A673 (cell line): ENCODE measurements at regions of chr1 and their contacts with region 1.

Region 1: DNA sequence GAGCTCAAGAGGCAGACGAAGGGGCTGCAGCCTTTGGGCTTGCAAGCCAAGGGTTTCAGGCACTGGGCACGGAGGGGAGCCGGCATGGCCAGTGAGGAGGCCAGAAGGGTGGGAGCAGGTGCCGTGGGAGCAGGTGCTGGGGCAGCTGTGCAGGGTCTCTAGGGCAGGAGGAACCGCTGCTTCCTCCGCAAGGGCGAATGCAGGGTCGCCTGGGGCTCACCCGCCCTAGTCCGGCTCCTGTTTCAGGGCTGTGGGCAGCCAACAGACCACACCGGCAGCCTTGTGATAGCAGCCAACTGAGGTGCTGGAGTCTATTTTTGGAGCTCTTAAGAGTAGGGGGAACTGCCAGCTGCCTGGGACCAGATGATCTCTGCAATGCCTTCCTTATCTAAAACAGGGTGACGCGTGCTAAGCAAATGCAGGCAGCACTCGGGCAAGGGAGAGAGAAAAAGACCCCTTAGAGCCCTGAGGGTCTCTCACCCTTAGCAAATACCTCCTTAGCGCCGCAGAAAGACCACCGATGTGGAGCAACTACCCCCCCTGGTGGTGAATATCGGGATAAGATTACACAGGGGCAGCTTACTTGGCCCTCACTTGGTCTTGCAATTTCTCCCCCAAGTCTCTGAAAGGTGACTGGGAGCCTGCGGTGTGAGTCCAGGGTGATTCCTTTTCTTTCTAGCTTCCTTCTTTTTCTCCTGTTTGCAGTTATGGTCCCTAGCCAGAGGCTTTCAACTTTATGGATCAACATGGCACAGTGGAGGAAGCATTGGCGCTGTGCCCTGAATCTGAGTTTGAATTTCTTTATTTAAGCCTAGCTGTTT is 20.7 kb upstream of the MAPKAPK2 start:
- DNase-seq: peak; percentile 79
- H3K4me3 ChIP-seq: peak overlapping the region; percentile 25
- H3K27ac ChIP-seq: no peak overlapping the region
- H3K4me1 ChIP-seq: peaks cover 9% of the 10 kb centered on the region
- H3K27me3 ChIP-seq: peaks cover 14% of the 10 kb centered on the region
- CTCF ChIP-seq: peak; percentile 81

Region 2: DNA sequence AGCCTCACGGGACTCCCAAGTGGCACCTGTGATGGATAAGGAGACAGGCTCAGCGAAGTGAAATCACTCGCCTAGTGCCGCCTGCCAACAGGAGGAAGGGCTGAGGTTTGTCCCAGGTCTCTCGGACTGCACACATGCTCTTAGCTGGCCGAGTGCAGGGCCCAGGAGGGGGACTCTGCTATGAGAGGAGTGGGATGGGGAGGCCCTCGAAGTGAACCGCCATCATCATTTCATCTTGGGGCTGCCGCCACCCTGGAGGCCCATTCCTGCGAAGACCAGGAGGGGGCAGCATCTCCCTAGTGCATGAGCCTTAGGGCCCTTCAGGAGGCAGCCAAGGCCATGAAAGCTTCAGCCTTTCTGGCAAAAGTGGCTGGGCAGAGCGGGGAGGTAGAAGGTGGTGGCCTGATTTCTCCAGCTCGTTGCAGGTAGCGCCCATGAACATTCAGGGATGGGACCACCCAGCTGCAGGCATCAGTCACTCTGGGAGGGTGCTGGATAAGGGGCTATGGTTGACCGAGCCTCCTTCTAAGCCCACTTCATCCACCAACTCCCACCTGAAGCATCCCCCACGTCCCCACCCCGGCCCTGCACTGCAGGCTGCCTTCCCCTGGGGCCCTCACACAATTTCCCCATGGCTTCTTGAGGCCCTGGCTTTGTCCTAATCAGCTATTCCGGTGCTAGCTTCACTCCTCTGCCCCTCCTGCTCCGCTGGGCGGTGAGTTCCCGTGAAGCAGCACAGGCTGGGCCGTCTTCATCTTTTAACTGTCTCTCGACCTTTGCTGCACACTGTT is 173.9 kb before region 1 on chr1:
- CTCF ChIA-PET with region 1: interaction called, 9 read pairs
- POLR2A ChIA-PET with region 1: no interaction called
- intact Hi-C with region 1: loop called (anchors 5 kb)
- DNase-seq: peak; percentile 76
- H3K4me3 ChIP-seq: no peak overlapping the region
- H3K27ac ChIP-seq: no peak overlapping the region
- H3K4me1 ChIP-seq: no peaks in the 10 kb centered on the region
- H3K27me3 ChIP-seq: no peaks in the 10 kb centered on the region
- CTCF ChIP-seq: peak; percentile 97

Region 3: GRCh38 chr1:206612129-206612876 is 51.7 kb before region 1 on chr1 and contains the start of gene EIF2D:
- CTCF ChIA-PET with region 1: interaction called, 7 read pairs
- POLR2A ChIA-PET with region 1: no interaction called
- intact Hi-C with region 1: loop called (anchors 2 kb)
- DNase-seq: peak; percentile 96
- H3K4me3 ChIP-seq: peak within 1 kb of the TSS; percentile 97
- H3K27ac ChIP-seq: peak within 1 kb of the TSS; percentile 95
- H3K4me1 ChIP-seq: peaks cover 6% of the 10 kb centered on the region
- H3K27me3 ChIP-seq: no peaks in the 10 kb centered on the region
- CTCF ChIP-seq: peak; percentile 96
- total RNA-seq, gene EIF2D: 32.6 and 32.7 TPM in 2 replicates

Region 4: DNA sequence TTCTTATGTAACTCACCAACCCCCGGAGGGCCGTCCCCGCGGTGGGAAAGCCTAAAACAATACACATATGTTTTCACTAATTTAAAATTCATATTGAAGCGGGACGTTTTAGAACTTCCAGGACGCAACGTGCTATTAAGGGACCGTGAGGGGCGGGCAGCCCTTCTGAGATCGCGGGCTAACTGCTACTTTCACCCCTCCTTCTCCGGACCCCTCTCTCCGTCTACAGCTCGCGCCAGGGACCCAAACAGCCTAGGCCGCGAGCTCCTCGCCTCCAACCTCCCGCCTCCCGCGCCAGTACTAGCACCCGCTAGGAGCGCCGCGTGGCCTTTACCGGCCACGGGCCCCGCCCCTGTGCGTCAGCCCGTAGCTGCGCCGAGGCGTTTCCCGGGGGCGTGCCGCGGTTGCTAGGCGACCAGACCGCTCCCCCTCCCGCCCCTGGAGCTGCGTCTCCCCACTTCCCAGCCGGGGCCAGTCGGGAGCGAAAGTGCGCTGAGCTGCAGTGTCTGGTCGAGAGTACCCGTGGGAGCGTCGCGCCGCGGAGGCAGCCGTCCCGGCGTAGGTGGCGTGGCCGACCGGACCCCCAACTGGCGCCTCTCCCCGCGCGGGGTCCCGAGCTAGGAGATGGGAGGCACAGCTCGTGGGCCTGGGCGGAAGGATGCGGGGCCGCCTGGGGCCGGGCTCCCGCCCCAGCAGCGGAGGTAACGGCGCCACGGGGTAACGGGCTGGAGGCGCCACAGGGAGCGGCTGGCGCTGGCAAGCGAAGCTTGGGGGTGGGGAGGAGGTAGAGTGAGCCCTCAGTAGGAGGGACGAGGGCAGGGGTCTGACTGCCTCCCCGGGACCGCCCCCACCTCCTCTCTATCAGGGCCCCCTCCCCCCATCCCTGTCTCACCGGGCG is 28.7 kb before region 1 on chr1 and contains the start of gene DYRK3:
- CTCF ChIA-PET with region 1: interaction called, 45 read pairs
- POLR2A ChIA-PET with region 1: no interaction called
- intact Hi-C with region 1: loop called (anchors 1 kb)
- DNase-seq: peak; percentile 96
- H3K4me3 ChIP-seq: peak within 1 kb of the TSS; percentile 96
- H3K27ac ChIP-seq: peak within 1 kb of the TSS; percentile 69
- H3K4me1 ChIP-seq: peaks cover 38% of the 10 kb centered on the region
- H3K27me3 ChIP-seq: no peaks in the 10 kb centered on the region
- CTCF ChIP-seq: no peak; the same call in 1 of the 2 replicates
- total RNA-seq, gene DYRK3: 18.7 and 24.0 TPM in 2 replicates

Region 5: DNA sequence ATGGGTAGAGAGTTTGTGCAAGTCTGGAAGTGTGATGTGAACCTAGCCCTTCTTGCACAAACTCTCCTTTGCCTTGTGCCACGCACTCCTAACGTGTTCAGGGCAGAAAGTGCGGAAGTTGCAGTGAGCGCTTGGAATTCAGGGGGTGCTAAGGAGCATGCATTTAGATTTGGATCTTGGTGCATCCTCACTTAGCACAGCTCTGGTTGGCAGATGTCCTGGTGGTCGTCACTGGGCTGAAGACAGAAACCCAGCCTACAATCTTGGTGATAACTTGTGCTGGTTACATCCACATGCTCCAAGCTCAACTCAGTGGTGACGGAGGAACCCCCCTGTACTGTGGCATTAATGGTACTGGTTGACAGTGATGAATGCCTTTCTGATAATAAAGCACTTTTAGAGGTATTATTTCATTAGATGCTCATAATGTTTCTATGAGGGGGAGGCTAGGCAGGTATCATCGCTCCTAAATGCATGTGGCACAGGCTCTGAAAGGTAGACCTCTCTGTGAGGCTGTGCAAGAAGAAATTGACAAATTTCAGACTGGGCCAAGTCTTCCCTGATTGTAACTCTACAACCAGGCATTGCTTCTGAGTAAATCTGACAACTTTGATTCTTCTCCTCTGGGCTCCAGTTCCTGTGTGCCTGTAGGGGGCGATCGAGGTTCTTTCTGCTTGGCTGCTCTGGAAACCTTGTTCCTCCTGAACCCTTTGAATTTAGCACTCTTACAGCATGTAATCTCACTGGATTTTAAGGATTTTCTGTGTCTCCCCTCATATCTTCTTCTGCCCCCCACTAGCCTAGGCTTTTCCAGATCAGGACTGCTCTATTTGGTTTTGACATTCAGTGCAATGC is 61.3 kb after region 1 on chr1:
- CTCF ChIA-PET with region 1: interaction called, 16 read pairs
- POLR2A ChIA-PET with region 1: no interaction called
- intact Hi-C with region 1: no loop called
- DNase-seq: peak; percentile 65
- H3K4me3 ChIP-seq: no peak overlapping the region
- H3K27ac ChIP-seq: no peak overlapping the region
- H3K4me1 ChIP-seq: no peaks in the 10 kb centered on the region
- H3K27me3 ChIP-seq: no peaks in the 10 kb centered on the region
- CTCF ChIP-seq: peak; percentile 79

Region 6: DNA sequence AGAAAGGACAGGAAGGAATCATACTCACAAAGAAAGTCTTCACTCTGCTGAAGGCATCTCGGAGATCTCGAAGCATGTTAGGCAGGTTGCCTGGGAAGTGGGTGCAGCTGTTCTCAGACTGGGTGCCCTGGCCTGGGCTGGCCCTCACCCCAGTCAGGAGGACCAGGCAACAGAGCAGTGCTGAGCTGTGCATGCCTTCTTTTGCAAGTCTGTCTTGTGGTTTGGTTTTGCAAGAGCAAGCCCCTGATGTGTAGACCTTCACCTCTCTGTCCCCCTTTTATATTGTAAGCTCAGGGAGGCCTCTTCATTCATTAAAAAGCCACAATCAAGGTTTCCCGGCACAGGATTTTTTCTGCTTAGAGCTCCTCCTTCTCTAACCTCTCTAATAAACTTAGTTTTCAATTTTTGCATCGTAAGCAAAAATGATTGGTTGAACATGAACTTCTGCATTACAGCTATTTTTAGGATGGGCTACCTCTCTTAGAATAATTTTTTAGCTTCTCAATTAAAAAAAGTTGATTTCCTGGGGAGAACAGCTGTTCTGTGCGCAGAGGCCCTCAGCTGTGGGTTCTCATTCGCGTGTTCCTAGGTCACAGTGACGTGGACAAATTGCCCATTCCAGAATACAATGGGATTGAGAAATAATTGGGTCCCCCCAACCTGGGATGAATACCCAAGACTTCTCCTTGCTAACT is 108.3 kb after region 1 on chr1 and contains the start of gene IL10:
- CTCF ChIA-PET with region 1: no interaction called
- POLR2A ChIA-PET with region 1: no interaction called
- intact Hi-C with region 1: no loop called
- DNase-seq: no peak
- H3K4me3 ChIP-seq: no peak within 1 kb of the TSS
- H3K27ac ChIP-seq: no peak within 1 kb of the TSS
- H3K4me1 ChIP-seq: no peaks in the 10 kb centered on the region
- H3K27me3 ChIP-seq: peaks cover 4% of the 10 kb centered on the region
- CTCF ChIP-seq: no peak
- total RNA-seq, gene IL10: not detected in 2 replicates